Activated B cell treated with CpG ODN at 0.5 μM for 24 hours (primary cell): ENCODE measurements at regions of chr12 and their contacts with region 1.

Region 1: GRCh38 chr12:68932961-68933893 is at the start of gene CPM:
- DNase-seq: peak; percentile 78
- ATAC-seq: peak; percentile 97
- H3K4me3 Mint-ChIP-seq: peak within 1 kb of the TSS; percentile 83
- H3K27ac Mint-ChIP-seq: peak within 1 kb of the TSS; percentile 28
- H3K4me1 Mint-ChIP-seq: peaks cover 9% of the 10 kb centered on the region
- H3K27me3 Mint-ChIP-seq: no peaks in the 10 kb centered on the region
- CTCF ChIP-seq: no peak
- total RNA-seq, gene CPM: 6.3 and 10.1 TPM in 2 replicates

Region 2: GRCh38 chr12:68871921-68872320 is 61.3 kb before region 1 on chr12:
- CTCF ChIA-PET with region 1: no interaction called
- POLR2A ChIA-PET with region 1: no interaction called
- intact Hi-C with region 1: loop called (anchors 2 kb)
- DNase-seq: no peak
- ATAC-seq: peak; percentile 54
- H3K4me3 Mint-ChIP-seq: no peak overlapping the region
- H3K27ac Mint-ChIP-seq: no peak overlapping the region
- H3K4me1 Mint-ChIP-seq: peaks cover 7% of the 10 kb centered on the region
- H3K27me3 Mint-ChIP-seq: no peaks in the 10 kb centered on the region
- CTCF ChIP-seq: no peak

Region 3: DNA sequence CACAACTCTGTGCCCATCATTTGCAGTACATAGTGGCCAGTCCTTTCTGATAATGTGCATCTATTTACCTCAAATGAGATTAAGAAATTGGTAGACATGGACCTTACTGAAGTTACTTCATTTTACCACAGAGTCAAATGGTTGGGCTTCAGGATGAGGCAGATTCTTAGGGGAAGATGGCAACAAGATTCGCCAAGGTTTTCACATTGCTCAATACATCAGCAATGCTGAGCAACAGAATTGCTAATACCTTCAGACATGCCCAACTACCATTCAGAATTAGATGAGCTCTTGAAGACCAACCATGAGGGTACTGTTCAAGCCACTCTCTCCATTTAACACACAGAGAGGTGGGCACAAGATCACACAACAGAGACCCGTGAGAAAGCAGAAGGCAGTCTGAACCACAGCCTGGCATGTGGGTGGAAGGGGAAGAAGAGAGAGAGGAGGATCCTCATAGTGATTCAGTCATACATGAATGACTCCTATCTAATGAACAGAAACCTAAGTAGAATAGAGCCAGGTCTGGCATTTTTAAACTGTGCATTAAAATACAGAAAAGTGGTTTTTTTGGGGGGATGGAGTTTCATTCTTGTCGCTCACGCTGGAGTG is 28.8 kb before region 1 on chr12:
- CTCF ChIA-PET with region 1: no interaction called
- POLR2A ChIA-PET with region 1: interaction called, 5 read pairs
- intact Hi-C with region 1: loop called (anchors 1 kb)
- DNase-seq: no peak
- ATAC-seq: peak; percentile 97
- H3K4me3 Mint-ChIP-seq: peak overlapping the region; percentile 57
- H3K27ac Mint-ChIP-seq: peak overlapping the region; percentile 61
- H3K4me1 Mint-ChIP-seq: peaks cover 44% of the 10 kb centered on the region
- H3K27me3 Mint-ChIP-seq: no peaks in the 10 kb centered on the region
- CTCF ChIP-seq: no peak

Region 4: DNA sequence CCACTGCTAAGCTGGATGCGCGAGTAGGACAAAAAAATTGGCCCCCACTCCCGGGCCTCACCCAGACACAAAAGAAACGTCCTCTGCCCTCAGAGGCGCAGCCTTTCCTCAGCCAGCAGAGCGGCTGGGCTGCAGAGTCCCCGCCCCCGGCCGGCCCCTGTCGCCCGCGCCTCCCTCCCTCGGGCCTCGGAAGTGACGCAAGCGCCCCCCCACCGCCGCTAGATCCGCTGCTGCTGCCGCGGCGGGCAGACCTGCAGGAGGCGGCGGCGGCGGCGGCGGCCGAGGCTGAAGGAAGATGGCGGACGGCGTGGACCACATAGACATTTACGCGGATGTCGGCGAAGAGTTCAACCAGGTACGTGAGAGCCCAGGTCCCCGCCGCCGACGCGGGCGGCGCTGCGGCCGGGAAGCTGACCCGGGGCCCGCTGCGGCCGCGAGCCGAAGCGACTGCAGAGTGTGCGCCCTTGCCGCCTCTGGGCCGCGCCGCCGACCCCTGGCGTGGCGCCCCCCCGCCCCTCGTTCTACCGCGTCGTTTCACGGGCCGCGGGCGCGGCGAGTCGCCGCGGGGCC is 306.2 kb after region 1 on chr12 and contains the start of gene CPSF6:
- CTCF ChIA-PET with region 1: no interaction called
- POLR2A ChIA-PET with region 1: no interaction called
- intact Hi-C with region 1: loop called (anchors 2 kb)
- DNase-seq: peak; percentile 96
- ATAC-seq: peak; percentile 93
- H3K4me3 Mint-ChIP-seq: peak within 1 kb of the TSS; percentile 99
- H3K27ac Mint-ChIP-seq: peak within 1 kb of the TSS; percentile 96
- H3K4me1 Mint-ChIP-seq: peaks cover 51% of the 10 kb centered on the region
- H3K27me3 Mint-ChIP-seq: no peaks in the 10 kb centered on the region
- CTCF ChIP-seq: no peak
- total RNA-seq, gene CPSF6: 95.5 and 104 TPM in 2 replicates